T-cell (primary cell): ENCODE measurements at regions of chr2 and their contacts with region 1.

Region 1: GRCh38 chr2:63856303-63856603 is 14.6 kb downstream of the UGP2 start:
- DNase-seq: peak in 32 of 35 experiments; percentile 23 to 90 (median 69)
- ATAC-seq: peak; percentile 88 to 90 (median 90)
- H3K4me3 ChIP-seq: peak overlapping the region in 1 of 2 donors; percentile 24
- H3K4me3 Mint-ChIP-seq: peak overlapping the region; percentile 56 to 66 (median 61)
- H3K27ac ChIP-seq: peak overlapping the region; percentile 90
- H3K27ac Mint-ChIP-seq: peak overlapping the region; percentile 93 to 97
- H3K4me1 ChIP-seq: peaks cover 19 to 21% of the 10 kb centered on the region in 2 experiments
- H3K4me1 Mint-ChIP-seq: peaks cover 64 to 73% (median 65%) of the 10 kb centered on the region in 3 donors
- H3K27me3 ChIP-seq: no peaks in the 10 kb centered on the region
- H3K27me3 Mint-ChIP-seq: no peaks in the 10 kb centered on the region

Region 2: GRCh38 chr2:62856228-62857040 is 999.8 kb before region 1 on chr2:
- CTCF ChIA-PET with region 1: no interaction called
- POLR2A ChIA-PET with region 1: no interaction called
- DNase-seq: no peak
- ATAC-seq: no peak
- H3K4me3 ChIP-seq: no peak overlapping the region
- H3K4me3 Mint-ChIP-seq: no peak overlapping the region
- H3K27ac ChIP-seq: no peak overlapping the region
- H3K27ac Mint-ChIP-seq: no peak overlapping the region
- H3K4me1 ChIP-seq: no peaks in the 10 kb centered on the region
- H3K4me1 Mint-ChIP-seq: no peaks in the 10 kb centered on the region
- H3K27me3 ChIP-seq: no peaks in the 10 kb centered on the region
- H3K27me3 Mint-ChIP-seq: no peaks in the 10 kb centered on the region

Region 3: GRCh38 chr2:63424329-63425078 is 431.7 kb before region 1 on chr2:
- CTCF ChIA-PET with region 1: no interaction called
- POLR2A ChIA-PET with region 1: no interaction called
- DNase-seq: peak in 2 of 35 experiments; percentile 9 to 50
- ATAC-seq: peak in 1 of 4 experiments; percentile 37
- H3K4me3 ChIP-seq: no peak overlapping the region
- H3K4me3 Mint-ChIP-seq: no peak overlapping the region
- H3K27ac ChIP-seq: no peak overlapping the region
- H3K27ac Mint-ChIP-seq: no peak overlapping the region
- H3K4me1 ChIP-seq: no peaks in the 10 kb centered on the region
- H3K4me1 Mint-ChIP-seq: peaks cover 0 to 7% (median 0%) of the 10 kb centered on the region in 3 donors
- H3K27me3 ChIP-seq: no peaks in the 10 kb centered on the region
- H3K27me3 Mint-ChIP-seq: no peaks in the 10 kb centered on the region

Region 4: DNA sequence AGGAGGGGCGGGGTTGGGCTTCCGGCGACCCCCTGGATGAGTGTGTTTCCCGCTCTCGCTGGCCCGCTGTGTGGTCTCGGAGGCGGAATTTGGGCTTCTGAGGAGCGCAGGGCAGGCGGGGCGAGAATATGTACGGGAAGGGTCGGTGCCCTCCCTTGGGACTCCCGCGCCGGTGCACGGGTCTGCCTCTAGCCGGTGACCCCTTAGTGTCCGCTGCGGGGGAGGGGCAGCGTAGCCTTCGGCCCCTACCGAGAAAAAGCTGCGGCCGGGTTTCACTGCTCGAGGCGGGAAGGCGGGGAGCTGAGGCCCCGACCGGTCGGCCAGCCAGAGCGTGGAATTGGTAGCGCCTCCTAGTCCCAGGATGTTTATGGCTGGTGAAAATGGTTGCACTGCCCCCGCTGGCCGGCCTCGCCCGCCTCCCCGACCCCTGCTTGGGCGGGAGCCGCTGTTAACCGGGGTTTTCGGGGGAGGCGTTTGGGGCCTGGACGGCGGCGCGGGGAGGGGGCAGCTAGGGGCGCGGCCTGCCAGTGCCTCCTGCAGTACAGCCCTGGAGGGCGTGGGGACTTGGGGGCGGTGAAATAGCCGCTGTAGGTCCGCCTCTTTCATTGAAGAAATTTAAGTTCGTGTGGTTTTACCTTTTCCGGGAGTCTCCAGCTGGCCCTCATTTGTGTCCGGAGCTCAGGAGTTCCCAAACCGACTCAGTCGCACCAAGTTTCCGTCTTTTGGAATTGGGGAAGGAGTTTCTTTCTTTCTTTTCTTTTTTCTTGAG is 14.8 kb before region 1 on chr2 and contains the start of gene UGP2:
- CTCF ChIA-PET with region 1: interaction called, 9 to 28 read pairs
- POLR2A ChIA-PET with region 1: interaction called, 6 to 14 read pairs
- DNase-seq: peak; percentile 61 to 90 (median 83)
- ATAC-seq: peak; percentile 66 to 72 (median 70)
- H3K4me3 ChIP-seq: peak within 1 kb of the TSS; percentile 74 to 90
- H3K4me3 Mint-ChIP-seq: peak within 1 kb of the TSS; percentile 96 to 97 (median 97)
- H3K27ac ChIP-seq: peak within 1 kb of the TSS; percentile 85
- H3K27ac Mint-ChIP-seq: peak within 1 kb of the TSS; percentile 95 to 97
- H3K4me1 ChIP-seq: peaks cover 10 to 17% of the 10 kb centered on the region in 2 experiments
- H3K4me1 Mint-ChIP-seq: peaks cover 54 to 60% (median 55%) of the 10 kb centered on the region in 3 donors
- H3K27me3 ChIP-seq: no peaks in the 10 kb centered on the region
- H3K27me3 Mint-ChIP-seq: no peaks in the 10 kb centered on the region
- total RNA-seq, gene UGP2: 67.4 to 103 (median 80.1) TPM

Region 5: GRCh38 chr2:65754219-65754618 is 1898.0 kb after region 1 on chr2:
- CTCF ChIA-PET with region 1: no interaction called
- POLR2A ChIA-PET with region 1: no interaction called
- DNase-seq: no peak
- ATAC-seq: no peak
- H3K4me3 ChIP-seq: no peak overlapping the region
- H3K4me3 Mint-ChIP-seq: no peak overlapping the region
- H3K27ac ChIP-seq: no peak overlapping the region
- H3K27ac Mint-ChIP-seq: no peak overlapping the region
- H3K4me1 ChIP-seq: no peaks in the 10 kb centered on the region
- H3K4me1 Mint-ChIP-seq: no peaks in the 10 kb centered on the region
- H3K27me3 ChIP-seq: no peaks in the 10 kb centered on the region
- H3K27me3 Mint-ChIP-seq: no peaks in the 10 kb centered on the region